Activated naive CD4-positive, alpha-beta T cell treated with anti-CD3 and anti-CD28 coated beads for 36 hours (primary cell): ENCODE measurements at regions of chr4 and their contacts with region 1.

Region 1: GRCh38 chr4:152679414-152680281 is at the start of gene TMEM154:
- DNase-seq: peak; percentile 83
- H3K4me3 Mint-ChIP-seq: peak within 1 kb of the TSS; percentile 87
- H3K27ac Mint-ChIP-seq: peak within 1 kb of the TSS; percentile 85
- H3K4me1 Mint-ChIP-seq: peaks cover 59% of the 10 kb centered on the region
- H3K27me3 Mint-ChIP-seq: no peaks in the 10 kb centered on the region
- total RNA-seq, gene TMEM154: 17.3 to 20.4 TPM

Region 2: DNA sequence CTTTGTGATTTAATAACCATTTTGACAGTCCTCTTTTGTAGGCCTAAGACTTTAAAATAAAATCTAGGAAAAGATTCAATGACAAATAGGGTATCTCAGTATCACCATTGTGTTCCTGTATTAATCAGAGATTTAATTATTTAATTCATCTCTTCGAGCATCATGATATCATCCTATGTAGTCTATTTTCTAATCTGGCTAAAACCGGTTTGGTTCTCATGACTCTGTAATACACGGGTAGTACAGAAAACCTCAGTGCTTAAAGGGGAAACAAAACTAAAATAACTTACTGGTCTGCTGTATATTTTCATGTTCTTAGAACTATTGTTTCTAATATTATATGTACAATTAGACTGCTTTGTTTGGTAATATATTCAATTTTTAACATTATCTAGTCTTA is 120.0 kb before region 1 on chr4:
- CTCF ChIA-PET with region 1: no interaction called
- intact Hi-C with region 1: loop called (anchors 1 kb)
- DNase-seq: no peak
- H3K4me3 Mint-ChIP-seq: no peak overlapping the region
- H3K27ac Mint-ChIP-seq: no peak overlapping the region
- H3K4me1 Mint-ChIP-seq: peaks cover 15% of the 10 kb centered on the region
- H3K27me3 Mint-ChIP-seq: no peaks in the 10 kb centered on the region

Region 3: DNA sequence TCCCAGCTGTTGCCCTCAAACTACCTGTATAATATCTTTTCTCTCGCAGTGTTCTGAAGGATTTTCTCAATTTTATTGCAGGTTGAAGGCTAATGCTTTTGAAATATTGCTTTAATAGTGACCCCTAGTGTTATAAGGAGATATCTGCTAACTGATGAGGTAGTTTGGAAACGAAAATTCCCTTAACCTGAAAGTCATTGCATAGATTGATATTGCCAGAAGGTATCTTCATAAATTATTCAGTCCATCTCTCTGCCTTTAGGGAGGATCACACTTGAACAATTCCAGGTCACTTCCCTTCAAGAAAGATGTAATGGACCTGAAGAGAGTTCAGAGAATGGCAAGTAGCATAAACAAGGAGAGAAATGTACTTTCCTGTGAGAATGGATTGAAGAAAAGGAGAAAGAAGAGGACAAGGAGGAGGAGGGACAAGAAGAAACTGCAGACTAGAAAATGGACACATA is 55.8 kb after region 1 on chr4:
- CTCF ChIA-PET with region 1: interaction called, 8 read pairs
- intact Hi-C with region 1: loop called (anchors 2 kb)
- DNase-seq: no peak
- H3K4me3 Mint-ChIP-seq: no peak overlapping the region
- H3K27ac Mint-ChIP-seq: no peak overlapping the region
- H3K4me1 Mint-ChIP-seq: no peaks in the 10 kb centered on the region
- H3K27me3 Mint-ChIP-seq: peaks cover 3% of the 10 kb centered on the region

Region 4: GRCh38 chr4:152779513-152780266 is 100.0 kb after region 1 on chr4 and contains the starts of genes ARFIP1 and TIGD4:
- CTCF ChIA-PET with region 1: interaction called, 5 read pairs
- intact Hi-C with region 1: loop called (anchors 1 kb)
- DNase-seq: peak; percentile 97
- H3K4me3 Mint-ChIP-seq: peak within 1 kb of the TSS; percentile 91
- H3K27ac Mint-ChIP-seq: peak within 1 kb of the TSS; percentile 75
- H3K4me1 Mint-ChIP-seq: peaks cover 23% of the 10 kb centered on the region
- H3K27me3 Mint-ChIP-seq: peaks cover 4% of the 10 kb centered on the region
- total RNA-seq, gene ARFIP1: 5.0 to 5.1 TPM
- total RNA-seq, gene TIGD4: 0.07 to 0.27 TPM

Region 5: DNA sequence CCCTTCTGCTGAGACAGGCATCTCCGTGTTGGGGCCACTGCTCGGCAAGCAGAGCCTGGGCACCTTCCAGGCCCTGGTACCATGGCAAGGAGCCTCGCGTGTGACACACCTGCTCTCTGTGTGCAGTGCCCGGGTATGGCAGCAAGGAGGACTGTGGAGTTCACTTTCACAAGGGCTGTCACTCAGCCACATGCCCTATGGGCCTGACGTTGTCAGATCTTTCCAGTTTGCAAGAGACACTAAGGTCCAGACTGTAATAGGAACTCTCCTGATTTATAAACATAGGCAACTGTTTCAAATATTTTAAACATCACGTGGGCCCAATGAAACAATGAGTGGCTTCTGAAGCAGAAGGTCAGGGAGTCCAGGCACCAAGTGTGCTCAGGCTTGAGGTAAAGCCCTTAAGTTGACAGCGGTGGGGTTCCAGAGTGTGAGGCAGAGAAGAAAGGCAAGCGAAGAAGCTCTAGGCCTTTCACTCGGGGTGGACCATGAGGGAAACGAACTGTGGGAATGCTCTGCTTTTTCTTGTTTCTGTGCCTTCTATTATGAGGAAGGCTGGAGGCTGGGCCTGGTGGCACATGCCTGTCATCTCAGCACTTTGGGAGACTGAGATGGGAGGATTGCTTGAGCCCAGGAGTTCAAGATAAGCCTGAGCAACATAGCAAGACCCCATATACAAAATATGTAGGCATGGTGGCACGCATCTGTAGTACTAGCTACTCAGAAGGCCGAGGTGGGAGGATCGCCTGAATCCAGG is 416.0 kb after region 1 on chr4:
- CTCF ChIA-PET with region 1: no interaction called
- intact Hi-C with region 1: no loop called
- DNase-seq: no peak
- H3K4me3 Mint-ChIP-seq: no peak overlapping the region
- H3K27ac Mint-ChIP-seq: no peak overlapping the region
- H3K4me1 Mint-ChIP-seq: peaks cover 4% of the 10 kb centered on the region
- H3K27me3 Mint-ChIP-seq: no peaks in the 10 kb centered on the region

Region 6: DNA sequence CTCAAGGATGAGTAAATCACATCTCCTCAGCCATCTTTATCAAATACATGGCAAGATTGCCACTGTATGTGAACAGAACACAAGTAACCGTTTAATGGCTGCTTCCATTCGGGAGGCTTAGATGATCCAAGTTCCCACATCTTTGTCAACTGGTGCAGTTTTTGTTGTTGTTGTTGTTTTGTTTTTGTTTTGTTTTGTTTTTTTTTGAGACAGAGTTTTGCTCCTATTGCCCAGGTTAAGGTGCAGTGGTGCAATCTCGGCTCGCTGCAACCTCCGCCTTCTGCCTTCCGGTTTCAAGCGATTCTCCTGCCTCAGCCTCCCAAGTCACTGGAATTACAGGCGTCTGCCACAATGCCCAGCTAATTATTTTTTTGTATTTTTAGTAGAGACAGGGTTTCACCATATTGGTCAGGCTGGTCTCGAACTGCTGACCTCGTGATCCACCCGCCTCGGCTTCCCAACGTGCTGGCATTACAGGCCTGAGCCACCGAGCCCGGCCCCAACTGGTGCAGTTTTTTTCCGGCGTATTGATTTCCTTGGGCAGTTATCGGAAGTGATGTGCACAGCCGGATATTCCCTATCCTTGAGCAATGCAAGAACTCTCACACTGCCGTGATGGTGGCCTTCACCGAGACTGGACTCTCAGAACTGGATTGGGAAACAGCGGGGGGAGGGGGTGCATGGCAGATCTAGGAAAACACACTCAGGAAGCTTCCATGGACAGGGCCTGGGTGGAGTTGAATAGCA is 495.3 kb after region 1 on chr4:
- CTCF ChIA-PET with region 1: no interaction called
- intact Hi-C with region 1: loop called (anchors 1 kb)
- DNase-seq: no peak
- H3K4me3 Mint-ChIP-seq: no peak overlapping the region
- H3K27ac Mint-ChIP-seq: no peak overlapping the region
- H3K4me1 Mint-ChIP-seq: no peaks in the 10 kb centered on the region
- H3K27me3 Mint-ChIP-seq: no peaks in the 10 kb centered on the region

Region 7: DNA sequence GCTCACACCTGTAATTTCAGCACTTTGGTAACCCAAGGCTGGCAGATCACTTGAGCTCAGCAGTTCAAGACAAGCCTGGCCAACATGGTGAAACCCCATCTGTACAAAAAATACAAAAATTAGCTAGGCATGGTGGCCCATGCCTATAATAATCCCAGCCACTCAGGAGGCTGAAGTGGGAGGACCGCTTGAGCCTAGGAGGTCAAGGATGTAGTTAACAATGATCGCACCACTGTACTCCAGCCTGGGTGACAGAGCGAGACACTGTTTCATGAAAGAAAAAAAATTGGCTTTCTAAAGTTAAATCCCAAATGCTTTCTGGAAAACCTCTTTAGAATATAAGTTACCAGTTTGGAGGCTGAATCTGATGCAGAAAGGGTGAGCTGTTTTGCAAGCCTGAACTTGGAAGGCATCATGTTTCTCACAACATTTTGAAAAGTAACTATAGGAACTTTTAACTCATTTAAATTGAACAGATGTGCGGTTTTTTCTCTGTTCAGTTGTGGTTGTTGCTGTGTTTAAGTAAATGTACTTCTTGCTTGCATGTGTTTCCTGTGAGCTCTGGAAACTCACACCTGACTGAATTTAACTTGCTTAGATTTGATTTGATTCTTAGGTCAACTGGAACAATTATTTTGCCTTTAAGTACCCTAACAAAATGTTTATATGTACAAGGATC is 746.7 kb after region 1 on chr4:
- CTCF ChIA-PET with region 1: no interaction called
- intact Hi-C with region 1: no loop called
- DNase-seq: no peak
- H3K4me3 Mint-ChIP-seq: no peak overlapping the region
- H3K27ac Mint-ChIP-seq: peak overlapping the region; percentile 63
- H3K4me1 Mint-ChIP-seq: peaks cover 65% of the 10 kb centered on the region
- H3K27me3 Mint-ChIP-seq: no peaks in the 10 kb centered on the region